ENCODE measurements at regions of chr9 and their contacts with region 1.

Region 1: DNA sequence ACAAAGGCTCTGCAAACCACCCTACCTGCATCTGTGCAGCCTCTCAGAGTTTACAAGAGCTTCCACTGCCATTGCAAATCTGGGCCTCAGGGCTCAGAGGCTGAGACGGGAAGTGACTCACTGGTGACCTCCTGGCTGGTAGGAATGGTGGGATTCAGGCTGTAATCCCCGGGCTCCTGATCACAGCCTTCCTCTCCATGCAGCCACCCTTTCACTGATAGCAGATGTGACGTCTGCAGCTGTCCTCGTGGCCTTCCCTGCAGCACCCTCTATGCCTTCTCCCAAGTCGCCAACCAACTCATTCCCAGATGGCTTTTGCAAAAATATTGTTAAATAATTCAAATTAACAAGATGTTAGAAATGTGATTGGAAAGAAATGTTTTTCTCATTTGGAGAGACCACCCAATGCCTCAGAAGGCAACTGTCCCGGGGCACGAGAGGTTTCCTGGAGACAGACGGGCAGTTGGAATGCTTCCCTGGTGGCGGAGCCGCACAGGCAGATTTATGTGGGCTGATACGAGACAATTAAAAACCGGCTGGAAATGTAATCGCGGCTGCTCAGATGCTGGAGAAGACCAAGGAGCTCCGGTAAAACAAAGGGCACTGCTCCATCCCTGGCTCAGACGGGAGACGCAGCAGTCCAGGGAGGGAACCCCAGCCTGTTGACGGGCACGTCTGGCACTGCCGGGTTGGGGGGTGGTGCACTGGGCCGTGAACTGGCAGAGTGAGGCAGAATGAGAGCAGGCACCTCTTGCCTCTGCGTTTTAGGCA is 34.4 kb upstream of the SLC25A51 start:
- DNase-seq: no peak
- H3K4me3 ChIP-seq: no peak overlapping the region
- H3K27ac ChIP-seq: no peak overlapping the region
- H3K4me1 ChIP-seq: peaks cover 0 to 10% (median 2%) of the 10 kb centered on the region in 4 experiments; a peak in 2 of 7 replicates
- H3K27me3 ChIP-seq: no peaks in the 10 kb centered on the region
- CTCF ChIP-seq: no peak
- EP300 ChIP-seq: no peak
- POLR2A ChIP-seq: no peak
- RAD21 ChIP-seq: no peak

Region 2: GRCh38 chr9:37859043-37859442 is 79.3 kb before region 1 on chr9:
- CTCF ChIA-PET with region 1: no interaction called
- POLR2A ChIA-PET with region 1: no interaction called
- DNase-seq: no peak
- H3K4me3 ChIP-seq: no peak overlapping the region
- H3K27ac ChIP-seq: no peak overlapping the region
- H3K4me1 ChIP-seq: no peaks in the 10 kb centered on the region
- H3K27me3 ChIP-seq: no peaks in the 10 kb centered on the region
- CTCF ChIP-seq: peak in 1 of 3 experiments; percentile 3; a peak in 2 of 4 replicates
- EP300 ChIP-seq: no peak
- POLR2A ChIP-seq: no peak
- RAD21 ChIP-seq: peak; percentile 33 to 39

Region 3: DNA sequence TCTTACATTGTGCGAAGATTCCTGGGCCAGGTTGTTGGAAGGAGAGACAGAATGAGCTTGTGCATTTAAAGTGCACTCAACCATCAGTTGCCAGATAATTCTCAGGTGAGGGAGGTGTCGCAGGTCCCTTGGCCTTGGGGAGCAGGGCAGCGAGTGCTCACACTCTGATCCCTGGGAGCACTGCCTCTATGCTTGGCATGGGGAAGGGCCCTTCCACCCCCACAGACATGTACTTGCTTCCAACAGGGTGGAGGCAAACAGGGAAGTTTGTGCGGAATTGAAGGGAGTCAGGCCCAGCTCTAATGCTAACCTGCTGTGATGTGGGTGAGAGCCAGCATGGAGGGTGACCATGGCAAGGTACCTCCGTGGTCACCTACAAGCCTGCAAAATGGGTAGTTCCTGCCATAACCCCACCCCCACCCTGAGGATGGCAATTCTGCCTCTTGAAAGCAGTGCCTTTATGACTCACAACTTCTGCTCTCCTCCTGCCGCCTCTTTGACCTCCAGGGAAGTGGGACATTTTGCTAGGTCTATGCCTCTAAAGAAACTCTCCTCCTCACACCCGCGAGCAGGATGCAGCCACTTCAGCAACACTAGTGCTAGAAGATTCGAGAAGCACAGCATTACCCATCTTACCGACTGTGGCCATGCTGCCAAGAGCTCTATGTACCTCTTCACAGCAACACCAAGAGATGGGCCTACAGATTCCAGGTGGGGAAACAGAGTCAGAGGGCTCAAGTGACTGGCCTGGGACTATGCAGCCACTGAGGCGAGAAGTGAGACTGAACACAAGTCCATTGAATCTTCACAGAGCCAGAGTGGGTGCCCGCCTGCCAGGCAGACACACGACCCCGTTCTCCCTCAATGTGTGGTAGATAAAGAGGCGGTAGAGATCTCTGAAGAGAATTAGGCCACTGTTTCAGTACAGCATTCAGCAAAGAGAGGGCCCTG is 12.2 kb before region 1 on chr9:
- CTCF ChIA-PET with region 1: interaction called, 29 read pairs
- POLR2A ChIA-PET with region 1: no interaction called
- DNase-seq: no peak
- H3K4me3 ChIP-seq: no peak overlapping the region
- H3K27ac ChIP-seq: no peak overlapping the region
- H3K4me1 ChIP-seq: peaks cover 0 to 25% (median 13%) of the 10 kb centered on the region in 4 experiments; a peak in 5 of 7 replicates
- H3K27me3 ChIP-seq: no peaks in the 10 kb centered on the region
- CTCF ChIP-seq: no peak
- EP300 ChIP-seq: no peak
- POLR2A ChIP-seq: no peak
- RAD21 ChIP-seq: no peak

Region 4: GRCh38 chr9:37952731-37953130 is 14.4 kb after region 1 on chr9:
- CTCF ChIA-PET with region 1: interaction called, 23 read pairs
- POLR2A ChIA-PET with region 1: no interaction called
- DNase-seq: no peak
- H3K4me3 ChIP-seq: no peak overlapping the region
- H3K27ac ChIP-seq: no peak overlapping the region
- H3K4me1 ChIP-seq: no peaks in the 10 kb centered on the region
- H3K27me3 ChIP-seq: no peaks in the 10 kb centered on the region
- CTCF ChIP-seq: no peak
- EP300 ChIP-seq: no peak
- POLR2A ChIP-seq: no peak
- RAD21 ChIP-seq: no peak

Region 5: GRCh38 chr9:38153152-38153909 is 215.0 kb after region 1 on chr9:
- CTCF ChIA-PET with region 1: no interaction called
- POLR2A ChIA-PET with region 1: no interaction called
- DNase-seq: no peak
- H3K4me3 ChIP-seq: no peak overlapping the region
- H3K27ac ChIP-seq: no peak overlapping the region
- H3K4me1 ChIP-seq: no peaks in the 10 kb centered on the region
- H3K27me3 ChIP-seq: peaks cover 0 to 4% (median 0%) of the 10 kb centered on the region in 4 experiments; a peak in 1 of 7 replicates
- CTCF ChIP-seq: no peak
- EP300 ChIP-seq: no peak
- POLR2A ChIP-seq: no peak
- RAD21 ChIP-seq: no peak

Measured in H1 (cell line).